Activated T-helper 1 cell treated with anti-CD3 and anti-CD28 coated beads, Interleukin-12 subunit alpha, Interleukin-12 subunit beta, Interleukin-2, Interleukin-4 antibody, amounts not matched to agents 30 ng/mL and 10 ng/mL and 1 ng/mL, durations not matched to agents 14 hours and 24 hours and 36 hours (primary cell): ENCODE measurements at regions of chr4 and their contacts with region 1.

Region 1: DNA sequence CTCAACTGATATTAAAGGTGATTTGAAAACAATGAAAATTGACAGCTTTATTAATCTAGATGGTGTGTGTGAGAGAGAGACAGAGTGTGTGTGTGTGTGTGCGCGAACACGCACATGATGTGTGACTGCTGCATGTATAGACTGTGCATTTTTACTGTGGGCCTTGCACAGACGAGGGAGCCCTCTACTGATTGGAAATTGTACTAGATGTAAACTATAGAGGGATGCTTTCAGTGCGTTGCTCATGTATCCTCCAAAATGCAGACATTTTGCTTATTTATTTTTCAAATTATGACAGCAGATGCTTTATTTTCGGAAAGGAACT is 168.4 kb upstream of the GK2 start:
- DNase-seq: no peak
- H3K4me3 Mint-ChIP-seq: no peak overlapping the region
- H3K27ac Mint-ChIP-seq: no peak overlapping the region
- H3K4me1 Mint-ChIP-seq: no peaks in the 10 kb centered on the region
- H3K27me3 Mint-ChIP-seq: peaks cover 12% of the 10 kb centered on the region

Region 2: DNA sequence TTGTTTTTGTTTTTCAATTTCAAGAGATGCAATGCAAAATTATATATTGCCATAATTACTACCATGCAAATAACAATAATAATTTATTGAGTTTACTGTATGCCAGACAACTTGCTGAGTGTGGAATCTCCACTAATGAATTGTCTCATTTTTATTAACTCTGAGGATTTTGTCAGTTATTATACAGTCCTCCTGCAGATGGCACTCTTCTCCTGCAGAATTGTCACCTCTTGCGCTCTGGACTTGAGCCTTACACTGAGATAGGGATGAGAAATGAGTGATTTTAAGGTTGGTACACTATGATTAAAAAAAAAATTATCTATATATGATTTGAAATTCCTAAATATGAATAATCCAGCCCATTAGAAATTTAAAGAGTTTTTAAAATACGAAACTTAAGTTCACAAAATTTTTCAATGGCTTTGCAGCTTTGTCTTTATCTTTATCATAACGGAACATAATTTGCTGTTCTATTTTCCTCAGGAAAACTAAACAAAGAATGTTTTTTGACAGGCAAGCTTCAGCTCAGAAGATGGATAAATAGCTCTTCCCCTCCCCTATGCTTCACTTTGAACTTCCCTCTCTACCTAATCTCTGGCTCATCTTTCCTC is 624.4 kb before region 1 on chr4:
- intact Hi-C with region 1: loop called (anchors 1 kb)
- DNase-seq: no peak
- H3K4me3 Mint-ChIP-seq: no peak overlapping the region
- H3K27ac Mint-ChIP-seq: no peak overlapping the region
- H3K4me1 Mint-ChIP-seq: no peaks in the 10 kb centered on the region
- H3K27me3 Mint-ChIP-seq: peaks cover 39% of the 10 kb centered on the region

Region 3: DNA sequence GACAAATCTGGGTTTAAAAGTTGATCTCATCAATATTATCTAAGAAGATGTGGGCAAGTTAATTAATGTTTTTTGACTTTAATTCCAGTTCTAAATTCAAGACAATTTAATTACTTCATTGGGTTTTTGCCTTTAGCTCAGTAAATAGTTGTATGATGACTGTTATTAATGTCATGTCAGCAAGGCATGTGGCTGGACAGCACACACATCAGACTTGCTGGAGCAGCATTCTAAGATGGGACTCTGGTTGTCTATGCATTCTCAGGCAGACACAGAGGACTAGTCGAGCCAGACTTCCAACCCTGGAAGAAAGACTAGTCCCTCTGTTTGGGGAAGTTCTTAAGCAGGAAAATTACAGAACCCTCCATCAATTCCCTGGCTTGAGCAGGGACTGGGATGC is 12.3 kb after region 1 on chr4:
- intact Hi-C with region 1: no loop called
- DNase-seq: no peak
- H3K4me3 Mint-ChIP-seq: no peak overlapping the region
- H3K27ac Mint-ChIP-seq: no peak overlapping the region
- H3K4me1 Mint-ChIP-seq: no peaks in the 10 kb centered on the region
- H3K27me3 Mint-ChIP-seq: no peaks in the 10 kb centered on the region